Pancreas (tissue), 10 donors: ENCODE measurements at regions of chr22 and their contacts with region 1.

Region 1: GRCh38 chr22:17077255-17077654 is 7.5 kb upstream of the IL17RA start:
- DNase-seq: no peak
- ATAC-seq: no peak
- H3K4me3 ChIP-seq: no peak overlapping the region
- H3K27ac ChIP-seq: no peak overlapping the region
- H3K4me1 ChIP-seq: no peaks in the 10 kb centered on the region
- H3K27me3 ChIP-seq: no peaks in the 10 kb centered on the region
- CTCF ChIP-seq: no peak

Region 2: DNA sequence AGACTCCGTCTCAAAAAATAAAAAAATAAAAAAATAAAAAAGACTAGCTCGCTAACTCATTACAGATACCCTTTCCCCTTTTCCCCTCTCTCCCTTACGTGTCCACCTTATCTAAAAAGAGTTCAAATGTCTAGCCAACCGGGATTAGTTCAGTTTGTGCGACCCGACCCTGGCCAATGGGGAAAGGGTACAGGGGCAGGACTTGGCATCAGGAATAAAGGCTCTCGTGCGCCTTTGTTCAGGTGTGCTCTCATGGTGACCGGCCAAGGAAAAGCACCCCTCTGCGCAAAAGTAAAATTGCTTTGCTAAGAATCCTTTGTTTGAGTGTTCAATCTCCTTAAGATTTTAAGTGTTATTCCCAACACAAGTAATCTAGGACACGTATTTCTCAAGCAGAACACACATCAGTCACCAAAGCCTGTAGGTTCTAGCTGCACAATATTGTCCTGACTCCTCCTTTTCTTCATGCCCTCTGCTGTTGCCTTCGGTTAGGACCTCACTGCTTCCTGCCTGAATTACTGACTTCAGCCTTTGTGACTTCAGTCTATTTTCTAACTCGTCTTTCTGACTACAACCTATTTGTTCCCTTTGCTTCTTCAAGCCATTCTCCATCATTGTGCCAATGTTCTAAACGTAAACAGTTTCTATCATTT is 271.3 kb after region 1 on chr22:
- intact Hi-C with region 1: no loop called
- DNase-seq: no peak
- ATAC-seq: no peak
- H3K4me3 ChIP-seq: no peak overlapping the region
- H3K27ac ChIP-seq: no peak overlapping the region
- H3K4me1 ChIP-seq: no peaks in the 10 kb centered on the region
- H3K27me3 ChIP-seq: no peaks in the 10 kb centered on the region
- CTCF ChIP-seq: no peak

Region 3: GRCh38 chr22:17501679-17502285 is 424.5 kb after region 1 on chr22:
- intact Hi-C with region 1: loop called in 2 of 3 experiments (anchors 5 to 10 kb)
- DNase-seq: peak in 2 of 6 donors; percentile 4 to 30
- ATAC-seq: peak; percentile 91 to 97 (median 95)
- H3K4me3 ChIP-seq: no peak overlapping the region
- H3K27ac ChIP-seq: no peak overlapping the region
- H3K4me1 ChIP-seq: no peaks in the 10 kb centered on the region
- H3K27me3 ChIP-seq: no peaks in the 10 kb centered on the region
- CTCF ChIP-seq: peak in 3 of 4 donors; percentile 28 to 60 (median 49)